Left colon (tissue), 2 donors: ENCODE measurements at regions of chr10 and their contacts with region 1.

Region 1: DNA sequence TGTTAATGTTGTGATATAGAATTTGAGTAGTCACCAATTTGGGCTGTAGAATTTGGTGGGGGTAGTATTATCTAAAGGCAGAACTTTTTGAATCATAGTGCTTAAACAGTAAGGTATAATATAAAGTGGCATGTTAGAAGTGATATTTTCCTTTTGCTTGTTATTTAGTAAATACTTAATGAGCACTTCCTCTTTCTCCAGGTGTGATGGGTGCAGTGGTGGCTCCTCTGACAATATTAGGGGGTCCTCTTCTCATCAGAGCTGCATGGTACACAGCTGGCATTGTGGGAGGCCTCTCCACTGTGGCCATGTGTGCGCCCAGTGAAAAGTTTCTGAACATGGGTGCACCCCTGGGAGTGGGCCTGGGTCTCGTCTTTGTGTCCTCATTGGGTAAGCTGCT is 10.5 kb downstream of the GHITM start:
- DNase-seq: no peak
- ATAC-seq: no peak

Region 2: DNA sequence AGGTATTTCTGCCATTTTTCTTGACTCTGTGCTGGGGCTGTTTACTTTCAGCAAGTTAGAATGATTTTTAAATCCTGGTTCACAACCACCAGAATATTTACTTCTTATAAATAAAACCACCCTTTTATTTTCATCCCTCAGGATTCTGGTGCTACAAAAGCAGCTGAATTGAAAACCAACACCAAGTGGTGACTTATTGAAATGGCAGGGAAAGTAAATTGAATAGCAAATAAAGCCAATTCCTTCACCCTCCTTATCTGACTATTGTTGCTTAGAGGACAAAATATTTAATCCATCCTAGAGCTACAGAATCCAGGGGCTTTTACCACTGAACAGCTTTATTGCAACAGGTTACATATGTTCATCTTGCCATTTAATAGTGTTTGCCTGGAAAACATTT is 839.2 kb before region 1 on chr10:
- intact Hi-C with region 1: no loop called
- DNase-seq: no peak
- ATAC-seq: no peak

Region 3: DNA sequence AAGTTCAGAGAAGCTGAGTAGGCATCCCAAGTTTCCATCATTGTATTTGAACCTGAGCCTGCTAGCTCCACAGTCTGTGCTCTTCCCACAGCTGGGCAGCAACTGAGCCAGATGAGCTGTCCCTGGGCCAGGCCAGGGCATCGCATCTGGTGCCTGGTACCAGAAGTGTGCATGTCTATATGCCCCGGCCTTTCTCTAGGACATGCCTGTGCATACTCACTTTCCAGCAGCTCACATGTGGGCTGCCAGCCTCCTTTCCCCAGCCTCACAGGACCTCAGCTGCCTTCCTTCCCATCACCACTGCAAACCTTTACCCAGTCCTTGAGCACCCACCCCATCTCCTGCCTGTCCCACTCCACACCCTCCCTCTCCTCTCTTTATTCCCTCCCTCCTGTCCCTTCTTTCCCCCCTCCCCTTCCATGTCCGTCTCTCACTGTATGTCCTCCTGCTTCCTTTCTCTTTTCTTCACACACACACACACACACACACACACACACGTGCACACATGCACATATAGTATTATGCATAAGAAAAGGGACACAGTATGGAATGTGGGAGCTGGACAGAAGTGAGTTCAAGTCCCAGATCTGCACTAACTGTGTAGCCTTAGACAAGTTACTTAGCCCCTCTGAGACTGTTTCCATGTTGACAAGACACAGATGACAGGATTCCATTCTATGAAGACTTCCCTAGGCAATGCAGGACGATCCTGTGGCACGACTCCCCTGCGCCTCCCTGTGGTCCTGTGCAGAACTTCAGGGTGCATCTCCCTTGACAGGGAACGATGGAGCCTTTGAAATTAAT is 55.4 kb after region 1 on chr10:
- intact Hi-C with region 1: loop called in 1 of 2 experiments (anchors 2 kb)
- DNase-seq: peak in 1 of 2 donors; percentile 79
- ATAC-seq: peak; percentile 60

Region 4: GRCh38 chr10:84267503-84268126 is 117.8 kb after region 1 on chr10:
- intact Hi-C with region 1: no loop called
- DNase-seq: peak; percentile 61 to 86
- ATAC-seq: peak; percentile 59

Region 5: GRCh38 chr10:84397735-84398144 is 247.9 kb after region 1 on chr10:
- intact Hi-C with region 1: no loop called
- DNase-seq: no peak
- ATAC-seq: no peak